ENCODE measurements at regions of chr17 and their contacts with region 1.

Region 1: DNA sequence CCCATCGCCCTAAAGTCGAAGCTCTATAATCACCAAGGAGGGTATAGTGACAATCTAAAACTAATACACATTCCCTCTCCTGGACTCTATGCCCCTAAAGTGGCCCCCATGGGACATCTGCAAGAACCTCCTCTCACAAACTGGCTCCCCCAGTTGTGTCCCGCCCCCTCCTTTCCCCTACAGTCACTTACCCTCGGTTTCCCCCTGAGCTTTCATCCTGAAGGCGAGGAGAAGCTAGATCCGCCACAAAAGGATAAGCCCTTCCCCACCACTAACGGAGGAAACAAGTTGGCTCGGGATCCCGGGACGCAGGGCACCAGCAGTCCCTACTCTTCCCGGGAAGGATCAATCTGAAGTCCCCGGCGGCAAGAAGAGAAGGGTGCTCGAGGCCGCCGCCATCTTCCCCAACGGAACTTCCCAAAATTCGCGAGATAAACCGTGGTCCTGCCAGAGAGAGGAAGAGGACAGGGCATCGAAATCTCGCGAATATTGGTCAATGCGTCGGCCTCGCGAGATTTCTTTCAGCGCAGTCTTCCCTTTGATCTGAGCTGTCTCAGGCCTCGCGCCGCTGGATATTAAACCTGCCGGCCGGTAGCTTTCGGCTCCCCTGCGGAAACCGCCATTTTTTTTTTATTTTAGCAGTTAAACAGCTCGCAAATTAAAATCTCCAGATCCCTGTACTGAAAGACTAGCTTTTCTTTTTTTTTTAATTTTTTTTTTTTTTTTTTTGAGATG is at the start of gene MED1:
- DNase-seq: peak; percentile 80 to 98 (median 86)
- ATAC-seq: peak; percentile 92
- H3K4me3 ChIP-seq: peak within 1 kb of the TSS; percentile 75
- H3K4me3 Mint-ChIP-seq: peak within 1 kb of the TSS; percentile 99
- H3K27ac ChIP-seq: peak within 1 kb of the TSS; percentile 80 to 82
- H3K27ac Mint-ChIP-seq: peak within 1 kb of the TSS; percentile 99
- H3K4me1 ChIP-seq: peaks cover 22% of the 10 kb centered on the region
- H3K4me1 Mint-ChIP-seq: peaks cover 29% of the 10 kb centered on the region
- H3K27me3 ChIP-seq: no peaks in the 10 kb centered on the region
- H3K27me3 Mint-ChIP-seq: no peaks in the 10 kb centered on the region
- CTCF ChIP-seq: no peak
- total RNA-seq, gene MED1: 24.7 to 28.7 TPM

Region 2: DNA sequence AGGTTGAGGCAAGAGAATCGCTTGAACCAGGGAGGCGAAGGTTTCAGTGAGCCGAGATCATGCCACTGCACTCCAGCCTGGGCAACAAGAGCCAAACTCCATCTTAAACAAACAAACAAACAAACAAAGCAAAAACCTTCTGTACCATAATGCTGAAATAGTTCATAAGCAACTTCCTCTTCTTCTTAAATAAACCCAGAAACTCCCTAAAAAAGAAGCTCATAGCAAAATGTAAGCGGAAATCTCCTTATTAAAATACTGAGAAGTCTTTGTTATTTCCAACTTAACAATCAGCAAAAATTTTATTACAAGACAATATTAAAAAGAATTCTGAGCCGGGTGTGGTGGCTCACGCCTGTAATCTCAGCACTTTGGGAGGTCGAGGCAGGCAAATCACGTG is 132.4 kb before region 1 on chr17:
- CTCF ChIA-PET with region 1: no interaction called
- POLR2A ChIA-PET with region 1: no interaction called
- intact Hi-C with region 1: no loop called
- DNase-seq: no peak
- ATAC-seq: no peak
- H3K4me3 ChIP-seq: no peak overlapping the region
- H3K4me3 Mint-ChIP-seq: no peak overlapping the region
- H3K27ac ChIP-seq: no peak overlapping the region
- H3K27ac Mint-ChIP-seq: no peak overlapping the region
- H3K4me1 ChIP-seq: no peaks in the 10 kb centered on the region
- H3K4me1 Mint-ChIP-seq: no peaks in the 10 kb centered on the region
- H3K27me3 ChIP-seq: no peaks in the 10 kb centered on the region
- H3K27me3 Mint-ChIP-seq: no peaks in the 10 kb centered on the region
- CTCF ChIP-seq: no peak

Region 3: DNA sequence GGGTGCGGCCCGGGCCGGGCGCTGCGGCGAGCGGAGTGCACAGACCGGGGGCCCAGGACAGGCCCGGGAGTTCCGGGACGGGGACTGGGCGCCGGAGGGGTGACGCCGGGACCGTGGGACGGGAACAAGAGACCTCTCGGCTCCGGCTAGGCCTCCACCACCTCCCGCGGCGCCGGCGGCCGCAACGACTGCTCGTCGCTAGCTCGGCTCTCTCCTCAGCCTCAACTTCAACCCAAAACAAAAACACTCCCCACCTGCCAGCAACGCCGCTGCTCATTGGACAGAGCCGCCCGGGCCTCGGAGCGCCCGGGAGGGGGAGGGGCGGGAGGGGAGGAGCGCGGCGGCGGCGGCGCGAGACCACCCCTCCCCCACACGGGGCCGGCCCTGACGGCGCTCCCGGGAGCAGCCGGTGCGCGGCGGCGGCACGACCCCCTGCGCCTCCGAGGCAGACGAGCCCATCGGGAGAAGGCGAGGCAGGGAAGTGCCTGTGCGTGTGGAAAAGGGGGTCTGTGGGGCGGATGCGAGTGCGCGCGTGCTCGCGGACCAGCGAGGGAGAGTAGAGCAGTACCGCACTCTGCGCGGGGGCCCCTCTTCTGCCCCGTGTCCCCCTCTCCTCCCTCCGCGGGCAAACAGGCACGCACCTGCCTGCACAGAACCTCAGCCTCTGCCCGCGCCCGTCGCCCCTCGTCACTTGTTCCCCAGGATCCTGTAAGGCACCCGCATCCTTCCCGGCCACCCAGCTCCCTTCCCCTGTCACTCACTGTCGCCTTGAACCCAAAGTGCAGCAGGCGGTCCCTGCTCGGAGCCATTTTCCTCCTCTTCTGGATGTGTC is 49.4 kb before region 1 on chr17 and contains the start of gene FBXL20:
- CTCF ChIA-PET with region 1: interaction called, 3 read pairs
- POLR2A ChIA-PET with region 1: interaction called, 5 read pairs
- intact Hi-C with region 1: loop called in 1 of 2 experiments (anchors 2 kb)
- DNase-seq: peak; percentile 89 to 96 (median 94)
- ATAC-seq: peak; percentile 77
- H3K4me3 ChIP-seq: peak within 1 kb of the TSS; percentile 97
- H3K4me3 Mint-ChIP-seq: peak within 1 kb of the TSS; percentile 100
- H3K27ac ChIP-seq: peak within 1 kb of the TSS; percentile 68 to 72
- H3K27ac Mint-ChIP-seq: peak within 1 kb of the TSS; percentile 98
- H3K4me1 ChIP-seq: peaks cover 13% of the 10 kb centered on the region
- H3K4me1 Mint-ChIP-seq: peaks cover 40% of the 10 kb centered on the region
- H3K27me3 ChIP-seq: no peaks in the 10 kb centered on the region
- H3K27me3 Mint-ChIP-seq: no peaks in the 10 kb centered on the region
- CTCF ChIP-seq: no peak
- total RNA-seq, gene FBXL20: 16.7 to 17.1 TPM